GM10248 (cell line): ENCODE measurements at regions of chr1 and their contacts with region 1.

Region 1: GRCh38 chr1:9651565-9652378 is at the start of gene PIK3CD:
- DNase-seq: no peak
- CTCF ChIP-seq: no peak

Region 2: GRCh38 chr1:9665193-9665592 is 13.4 kb after region 1 on chr1:
- CTCF ChIA-PET with region 1: interaction called, 10 read pairs
- POLR2A ChIA-PET with region 1: no interaction called
- DNase-seq: no peak
- CTCF ChIP-seq: no peak